PC-9 (cell line): ENCODE measurements at regions of chr3 and their contacts with region 1.

Region 1: DNA sequence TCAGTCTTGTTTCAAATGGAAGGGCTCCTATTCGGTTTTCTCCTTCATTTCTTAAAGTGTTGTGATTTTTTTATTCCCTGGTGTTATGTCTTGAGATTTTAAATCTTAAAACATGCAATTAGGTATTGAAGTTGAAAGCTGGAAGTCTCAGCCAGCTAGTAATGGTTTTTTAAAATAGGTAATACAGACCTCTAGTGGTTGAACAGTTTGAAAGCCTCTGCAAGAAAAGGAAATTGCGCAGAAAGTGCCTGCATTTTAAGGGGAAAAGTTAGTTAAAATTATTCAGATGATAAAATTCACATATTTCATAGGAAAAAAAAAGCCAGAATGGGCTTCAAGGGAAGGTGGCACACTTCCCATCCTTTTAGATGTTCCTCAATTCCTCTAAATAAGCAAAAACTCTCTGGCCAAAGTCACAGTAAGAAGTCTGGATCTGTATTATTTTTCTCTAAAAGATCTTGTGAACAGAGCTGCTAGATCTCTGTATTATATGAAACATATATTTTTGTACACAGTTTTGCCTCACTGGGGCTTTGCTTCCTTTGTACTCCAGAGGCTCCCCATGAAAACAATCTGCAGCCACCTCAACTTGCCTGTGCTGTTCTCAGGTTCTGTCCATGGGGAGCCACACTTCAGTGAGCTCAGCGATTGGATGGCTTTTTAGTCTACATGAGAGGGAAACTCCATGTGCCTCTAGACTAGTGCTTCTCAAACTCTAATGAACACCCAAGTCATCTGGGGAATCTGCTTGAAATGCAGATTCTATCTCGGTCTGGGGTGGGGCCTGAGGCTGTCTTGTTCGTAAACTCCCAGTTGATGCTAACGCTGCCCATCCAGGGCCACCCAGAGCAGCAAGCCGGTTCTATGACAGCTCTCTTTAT is 21.5 kb downstream of the AGTR1 start:
- DNase-seq: no peak
- H3K4me3 ChIP-seq: no peak overlapping the region
- H3K27ac ChIP-seq: no peak overlapping the region
- H3K4me1 ChIP-seq: no peaks in the 10 kb centered on the region
- H3K27me3 ChIP-seq: no peaks in the 10 kb centered on the region
- CTCF ChIP-seq: peak; percentile 63

Region 2: DNA sequence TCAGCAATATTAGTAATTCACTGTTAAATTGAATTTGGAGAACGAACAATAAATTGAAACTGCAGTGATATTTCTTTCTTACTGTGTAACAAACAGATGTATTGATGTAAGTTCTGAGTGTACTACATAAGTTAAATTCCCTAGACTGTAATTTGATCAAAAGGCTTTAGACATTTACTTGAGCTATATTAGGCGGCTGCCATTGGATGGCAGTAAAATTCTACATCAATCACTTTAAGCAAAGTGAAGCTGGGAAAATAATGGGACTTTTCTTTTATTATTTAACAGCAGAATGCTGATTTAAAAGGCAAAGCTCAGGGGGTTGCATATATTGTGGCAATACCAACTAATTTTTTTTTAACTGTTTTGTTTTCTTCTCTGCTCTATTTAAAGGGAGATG is 1901.5 kb before region 1 on chr3:
- CTCF ChIA-PET with region 1: no interaction called
- POLR2A ChIA-PET with region 1: no interaction called
- intact Hi-C with region 1: loop called (anchors 5 kb)
- DNase-seq: no peak
- H3K4me3 ChIP-seq: no peak overlapping the region
- H3K27ac ChIP-seq: no peak overlapping the region
- H3K4me1 ChIP-seq: no peaks in the 10 kb centered on the region
- H3K27me3 ChIP-seq: no peaks in the 10 kb centered on the region
- CTCF ChIP-seq: no peak; the same call in 1 of the 2 replicates

Region 3: GRCh38 chr3:147090461-147090860 is 1628.8 kb before region 1 on chr3:
- CTCF ChIA-PET with region 1: no interaction called
- POLR2A ChIA-PET with region 1: no interaction called
- intact Hi-C with region 1: loop called (anchors 10 kb)
- DNase-seq: no peak
- H3K4me3 ChIP-seq: no peak overlapping the region
- H3K27ac ChIP-seq: no peak overlapping the region
- H3K4me1 ChIP-seq: no peaks in the 10 kb centered on the region
- H3K27me3 ChIP-seq: no peaks in the 10 kb centered on the region
- CTCF ChIP-seq: no peak

Region 4: DNA sequence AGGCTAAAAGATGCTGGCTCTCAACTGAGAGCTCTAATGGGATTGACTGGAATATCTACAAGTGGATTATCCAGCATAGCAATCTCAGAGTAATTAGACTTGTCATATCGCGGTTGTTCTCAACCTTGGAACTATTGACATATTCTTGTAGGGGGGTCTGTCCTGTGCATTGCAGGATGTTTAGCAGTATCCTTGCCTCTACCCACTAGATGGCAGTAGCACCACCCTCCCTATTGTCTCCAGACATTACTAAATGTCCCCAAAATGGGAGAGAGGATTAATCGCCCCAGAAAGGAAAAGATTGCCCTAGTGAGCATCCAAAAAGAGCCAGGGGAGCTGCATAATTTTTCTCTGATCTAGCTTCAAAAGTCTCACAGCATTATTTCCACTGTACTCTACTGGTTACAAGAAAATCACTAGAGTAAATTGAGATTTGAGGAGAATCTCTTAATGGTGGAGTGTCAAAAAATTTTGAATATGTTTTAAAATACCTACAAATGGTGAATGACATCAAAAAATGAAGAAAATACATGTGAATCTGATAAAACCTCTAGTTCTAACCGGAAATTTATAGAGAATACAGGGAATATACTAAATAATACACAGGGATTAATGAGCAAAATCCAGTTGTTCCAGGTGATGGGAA is 409.7 kb before region 1 on chr3:
- CTCF ChIA-PET with region 1: no interaction called
- POLR2A ChIA-PET with region 1: no interaction called
- intact Hi-C with region 1: loop called (anchors 5 kb)
- DNase-seq: peak in 1 of 2 experiments; percentile 20
- H3K4me3 ChIP-seq: no peak overlapping the region
- H3K27ac ChIP-seq: no peak overlapping the region
- H3K4me1 ChIP-seq: no peaks in the 10 kb centered on the region
- H3K27me3 ChIP-seq: no peaks in the 10 kb centered on the region
- CTCF ChIP-seq: peak; percentile 65

Region 5: GRCh38 chr3:148379763-148380382 is 339.3 kb before region 1 on chr3:
- CTCF ChIA-PET with region 1: interaction called, 18 read pairs
- POLR2A ChIA-PET with region 1: interaction called, 6 read pairs
- intact Hi-C with region 1: loop called (anchors 1 kb)
- DNase-seq: no peak
- H3K4me3 ChIP-seq: no peak overlapping the region
- H3K27ac ChIP-seq: no peak overlapping the region
- H3K4me1 ChIP-seq: no peaks in the 10 kb centered on the region
- H3K27me3 ChIP-seq: no peaks in the 10 kb centered on the region
- CTCF ChIP-seq: peak; percentile 62

Region 6: DNA sequence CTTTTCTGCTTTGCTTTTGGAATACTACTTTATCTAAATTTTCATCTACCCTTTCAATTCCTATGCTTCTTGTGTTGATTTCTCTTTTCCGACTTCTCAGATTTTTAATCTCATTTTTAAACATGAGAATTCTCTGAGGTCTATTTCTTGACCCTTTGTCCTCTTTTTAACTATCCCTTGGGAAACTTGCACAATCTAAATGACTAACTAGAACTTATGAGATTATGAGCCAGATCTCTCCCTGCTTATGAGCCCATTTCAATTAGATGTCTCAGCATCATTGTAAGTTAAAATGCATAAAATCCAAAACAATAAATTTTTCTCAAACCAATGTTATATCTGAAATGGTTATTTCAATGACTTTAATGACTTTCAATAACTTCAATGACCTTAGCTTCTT is 318.5 kb before region 1 on chr3:
- CTCF ChIA-PET with region 1: no interaction called
- POLR2A ChIA-PET with region 1: no interaction called
- intact Hi-C with region 1: no loop called
- DNase-seq: no peak
- H3K4me3 ChIP-seq: no peak overlapping the region
- H3K27ac ChIP-seq: no peak overlapping the region
- H3K4me1 ChIP-seq: no peaks in the 10 kb centered on the region
- H3K27me3 ChIP-seq: no peaks in the 10 kb centered on the region
- CTCF ChIP-seq: no peak

Region 7: GRCh38 chr3:148648685-148649352 is 70.4 kb before region 1 on chr3:
- CTCF ChIA-PET with region 1: no interaction called
- POLR2A ChIA-PET with region 1: no interaction called
- intact Hi-C with region 1: loop called (anchors 5 kb)
- DNase-seq: no peak
- H3K4me3 ChIP-seq: no peak overlapping the region
- H3K27ac ChIP-seq: no peak overlapping the region
- H3K4me1 ChIP-seq: peaks cover 3% of the 10 kb centered on the region
- H3K27me3 ChIP-seq: no peaks in the 10 kb centered on the region
- CTCF ChIP-seq: no peak